ENCODE measurements at regions of chr3 and their contacts with region 1.

Region 1: GRCh38 chr3:123986427-123986826 is 5.5 kb downstream of the ROPN1 start:
- DNase-seq: no peak
- ATAC-seq: no peak
- H3K4me3 ChIP-seq: no peak overlapping the region
- H3K27ac ChIP-seq: no peak overlapping the region
- H3K4me1 ChIP-seq: no peaks in the 10 kb centered on the region
- H3K27me3 ChIP-seq: peaks cover 0 to 20% (median 0%) of the 10 kb centered on the region in 3 donors
- CTCF ChIP-seq: no peak

Region 2: GRCh38 chr3:123688241-123688747 is 298.1 kb before region 1 on chr3:
- intact Hi-C with region 1: no loop called
- DNase-seq: no peak
- ATAC-seq: peak in 2 of 4 donors; percentile 45 to 54
- H3K4me3 ChIP-seq: no peak overlapping the region
- H3K27ac ChIP-seq: no peak overlapping the region
- H3K4me1 ChIP-seq: no peaks in the 10 kb centered on the region
- H3K27me3 ChIP-seq: no peaks in the 10 kb centered on the region
- CTCF ChIP-seq: no peak

Region 3: DNA sequence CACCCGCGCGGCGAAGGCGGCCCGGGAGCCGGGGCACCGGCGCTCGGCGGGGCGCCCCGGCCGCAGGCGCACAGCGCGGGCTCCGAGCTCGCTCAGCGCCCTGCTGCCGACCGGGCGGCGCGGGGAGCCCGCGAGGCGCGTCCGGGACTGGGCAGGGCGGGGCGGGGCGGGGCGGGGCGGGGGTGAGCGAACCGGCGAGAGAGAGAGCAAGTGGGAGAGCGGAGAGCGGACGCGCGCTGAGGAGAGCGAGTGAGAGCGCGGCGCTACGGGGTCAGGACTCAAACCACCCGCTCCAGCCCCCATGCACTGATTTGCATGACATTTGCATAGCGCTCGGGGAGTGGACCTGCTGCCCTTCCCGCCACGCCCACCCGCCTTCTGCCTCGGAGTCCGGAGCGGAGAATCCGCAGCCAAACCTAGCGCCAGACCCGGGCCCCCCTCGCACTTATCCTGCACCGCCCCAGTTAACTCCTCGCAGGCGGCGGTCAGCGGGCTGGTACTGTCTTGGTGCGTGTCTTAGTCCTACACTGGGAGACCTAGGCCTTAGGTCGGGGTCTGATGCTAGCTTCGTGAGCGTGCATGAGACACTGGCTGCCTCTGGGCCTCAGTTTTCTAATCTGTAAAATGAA is 102.1 kb before region 1 on chr3 and contains the start of gene MYLK:
- intact Hi-C with region 1: loop called in 1 of 2 experiments (anchors 10 kb)
- DNase-seq: peak; percentile 82 to 86
- ATAC-seq: peak; percentile 94 to 100 (median 98)
- H3K4me3 ChIP-seq: peak within 1 kb of the TSS; percentile 65
- H3K27ac ChIP-seq: no peak within 1 kb of the TSS
- H3K4me1 ChIP-seq: peaks cover 10% of the 10 kb centered on the region
- H3K27me3 ChIP-seq: peaks cover 0 to 4% (median 0%) of the 10 kb centered on the region in 3 donors
- CTCF ChIP-seq: no peak
- total RNA-seq, gene MYLK: 5.4 to 13.7 (median 7.9) TPM